Mammary epithelial cell (primary cell): ENCODE measurements at regions of chr18 and their contacts with region 1.

Region 1: DNA sequence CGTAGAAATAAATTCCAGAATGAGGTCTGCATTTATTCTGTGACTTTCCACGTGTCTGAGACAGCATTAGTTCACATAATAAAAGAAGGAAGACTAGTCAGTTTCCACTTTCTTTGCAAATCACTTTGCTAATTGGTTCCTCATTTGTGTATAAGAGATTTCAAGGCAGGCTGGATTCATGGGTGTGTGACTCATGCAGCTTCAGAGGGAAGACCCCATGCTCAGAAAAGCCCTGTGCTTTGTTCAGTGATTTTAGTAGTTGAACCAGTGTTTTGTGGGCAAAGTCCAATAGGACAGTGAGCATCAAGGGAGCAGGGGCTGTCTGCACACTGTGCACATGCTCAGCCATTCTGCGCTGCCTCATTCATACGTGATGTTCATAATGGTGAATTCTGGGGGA is 297.8 kb downstream of the DLGAP1 start:
- DNase-seq: no peak
- H3K4me3 ChIP-seq: no peak overlapping the region
- H3K27ac ChIP-seq: no peak overlapping the region
- H3K4me1 ChIP-seq: no peaks in the 10 kb centered on the region
- H3K27me3 ChIP-seq: no peaks in the 10 kb centered on the region
- CTCF ChIP-seq: no peak

Region 2: GRCh38 chr18:4236940-4237663 is 79.8 kb after region 1 on chr18:
- CTCF ChIA-PET with region 1: no interaction called
- dilution Hi-C with region 1: loop called (anchors 5 kb)
- in situ Hi-C with region 1: no loop called
- intact Hi-C with region 1: no loop called
- DNase-seq: no peak
- H3K4me3 ChIP-seq: no peak overlapping the region
- H3K27ac ChIP-seq: no peak overlapping the region
- H3K4me1 ChIP-seq: no peaks in the 10 kb centered on the region
- H3K27me3 ChIP-seq: no peaks in the 10 kb centered on the region
- CTCF ChIP-seq: no peak